T-cell (primary cell): ENCODE measurements at regions of chr10 and their contacts with region 1.

Region 1: GRCh38 chr10:98045785-98046389 is 15.5 kb upstream of the CRTAC1 start:
- DNase-seq: peak; percentile 5 to 77 (median 48)
- ATAC-seq: peak; percentile 66 to 80 (median 72)
- H3K4me3 ChIP-seq: no peak overlapping the region
- H3K4me3 Mint-ChIP-seq: no peak overlapping the region
- H3K27ac ChIP-seq: no peak overlapping the region
- H3K27ac Mint-ChIP-seq: no peak overlapping the region
- H3K4me1 ChIP-seq: peaks cover 0 to 3% of the 10 kb centered on the region in 2 experiments
- H3K4me1 Mint-ChIP-seq: peaks cover 4 to 7% (median 4%) of the 10 kb centered on the region in 3 donors
- H3K27me3 ChIP-seq: peaks cover 0 to 29% of the 10 kb centered on the region in 2 experiments
- H3K27me3 Mint-ChIP-seq: peaks cover 23 to 36% of the 10 kb centered on the region in 2 donors

Region 2: GRCh38 chr10:97914837-97915211 is 131.1 kb before region 1 on chr10:
- CTCF ChIA-PET with region 1: interaction called, 7 to 17 read pairs
- POLR2A ChIA-PET with region 1: no interaction called
- DNase-seq: peak; percentile 27 to 79 (median 59)
- ATAC-seq: peak; percentile 68 to 81 (median 75)
- H3K4me3 ChIP-seq: no peak overlapping the region
- H3K4me3 Mint-ChIP-seq: peak overlapping the region in 1 of 3 donors; percentile 27
- H3K27ac ChIP-seq: no peak overlapping the region
- H3K27ac Mint-ChIP-seq: no peak overlapping the region
- H3K4me1 ChIP-seq: peaks cover 0 to 13% of the 10 kb centered on the region in 2 experiments
- H3K4me1 Mint-ChIP-seq: peaks cover 10 to 11% (median 10%) of the 10 kb centered on the region in 3 donors
- H3K27me3 ChIP-seq: peaks cover 0 to 37% of the 10 kb centered on the region in 2 experiments
- H3K27me3 Mint-ChIP-seq: peaks cover 5 to 7% of the 10 kb centered on the region in 2 donors